ENCODE measurements at regions of chr1 and their contacts with region 1.

Region 1: DNA sequence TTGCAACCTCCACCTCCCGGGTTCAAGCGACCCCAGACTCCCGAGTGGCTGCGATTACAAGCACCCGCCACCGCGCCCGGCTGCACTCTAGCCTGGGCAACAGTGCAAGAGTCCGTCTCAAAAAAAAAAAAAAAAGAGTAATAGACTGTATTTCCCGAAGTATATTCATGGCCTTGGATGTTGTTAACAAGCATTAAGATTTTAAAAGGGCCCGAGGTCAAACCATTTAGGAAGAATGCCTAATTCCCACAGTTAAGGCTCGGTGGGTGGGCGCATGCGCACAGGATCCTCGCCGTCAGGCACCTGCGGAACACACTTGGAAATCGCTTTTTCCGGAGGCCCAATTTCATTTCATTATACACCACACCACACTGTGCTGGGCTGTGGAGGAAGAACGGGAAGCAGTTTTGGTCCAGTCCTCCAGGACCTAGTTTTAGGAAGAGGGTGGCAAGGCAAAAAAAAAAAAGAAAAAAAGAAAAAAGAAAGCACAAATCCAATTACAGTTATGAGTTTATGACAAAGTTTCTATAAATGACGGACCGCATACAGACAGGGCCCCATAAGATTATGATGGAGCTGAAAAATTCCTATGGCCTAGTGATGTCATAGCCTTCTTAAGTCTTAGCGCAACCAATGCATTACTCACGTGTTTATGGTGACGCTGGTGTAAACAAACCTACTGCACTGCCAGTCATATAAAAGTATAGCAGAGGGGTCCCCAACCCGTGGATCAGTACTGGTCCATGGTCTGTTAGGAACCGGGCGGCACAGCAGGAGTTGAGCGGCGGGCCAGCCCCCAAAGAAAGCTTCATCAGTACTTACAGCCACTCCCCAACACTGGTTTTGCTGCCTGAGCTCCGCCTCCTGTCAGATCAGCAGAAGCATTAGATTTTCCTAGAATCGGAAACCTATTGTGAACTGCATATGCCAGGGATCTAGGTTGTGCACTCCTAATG is 38.2 kb downstream of the H3-3A start:
- DNase-seq: no peak
- H3K4me3 Mint-ChIP-seq: peak overlapping the region; percentile 47
- H3K27ac Mint-ChIP-seq: no peak overlapping the region
- H3K4me1 Mint-ChIP-seq: peaks cover 28% of the 10 kb centered on the region
- H3K27me3 Mint-ChIP-seq: no peaks in the 10 kb centered on the region
- CTCF ChIP-seq: no peak

Region 2: DNA sequence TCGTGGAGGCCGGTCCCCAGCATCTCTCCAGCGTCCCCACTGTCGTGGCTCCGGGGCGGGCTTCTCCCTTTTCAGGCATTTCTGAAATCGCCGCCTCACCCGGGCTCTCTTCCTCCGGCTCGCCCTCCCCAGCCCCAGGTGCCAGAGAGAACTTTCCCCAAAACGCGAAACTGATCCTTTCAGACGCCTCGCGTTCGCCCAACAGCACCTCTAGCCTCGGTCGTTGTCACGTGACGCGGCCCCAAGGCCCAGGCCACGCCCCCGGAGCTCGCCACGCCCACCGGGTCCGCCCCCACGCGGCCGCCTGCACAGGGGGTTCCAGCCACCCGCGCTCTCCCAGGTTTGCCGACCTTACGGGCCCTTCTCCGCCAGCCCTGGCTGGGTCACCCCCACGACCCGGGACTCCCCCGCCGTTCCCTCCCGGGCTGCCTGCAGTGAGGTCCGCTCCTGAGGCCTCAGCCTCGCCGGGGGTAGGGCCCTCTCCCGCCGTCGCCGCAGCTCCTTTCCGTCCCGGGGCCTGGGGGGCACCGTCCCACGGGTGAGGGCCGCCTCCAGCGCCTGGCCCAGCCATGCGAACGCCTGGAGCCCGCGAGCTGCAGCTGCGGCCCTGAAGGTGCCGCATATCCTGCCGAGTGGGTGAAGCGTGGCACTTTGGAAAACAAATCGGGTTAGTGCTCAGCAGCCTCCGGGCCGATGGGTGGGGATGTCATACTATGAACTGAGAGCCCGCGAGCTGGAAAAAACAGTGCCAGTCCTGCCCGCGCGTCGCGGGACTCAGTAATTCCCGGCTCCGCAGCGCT is 17.2 kb before region 1 on chr1:
- CTCF ChIA-PET with region 1: interaction called, 6 read pairs
- POLR2A ChIA-PET with region 1: interaction called, 39 read pairs
- intact Hi-C with region 1: no loop called
- DNase-seq: peak; percentile 97
- H3K4me3 Mint-ChIP-seq: peak overlapping the region; percentile 83
- H3K27ac Mint-ChIP-seq: peak overlapping the region; percentile 24
- H3K4me1 Mint-ChIP-seq: peaks cover 6% of the 10 kb centered on the region
- H3K27me3 Mint-ChIP-seq: no peaks in the 10 kb centered on the region
- CTCF ChIP-seq: no peak